Naive thymus-derived CD4-positive, alpha-beta T cell (primary cell): ENCODE measurements at regions of chr2 and their contacts with region 1.

Region 1: DNA sequence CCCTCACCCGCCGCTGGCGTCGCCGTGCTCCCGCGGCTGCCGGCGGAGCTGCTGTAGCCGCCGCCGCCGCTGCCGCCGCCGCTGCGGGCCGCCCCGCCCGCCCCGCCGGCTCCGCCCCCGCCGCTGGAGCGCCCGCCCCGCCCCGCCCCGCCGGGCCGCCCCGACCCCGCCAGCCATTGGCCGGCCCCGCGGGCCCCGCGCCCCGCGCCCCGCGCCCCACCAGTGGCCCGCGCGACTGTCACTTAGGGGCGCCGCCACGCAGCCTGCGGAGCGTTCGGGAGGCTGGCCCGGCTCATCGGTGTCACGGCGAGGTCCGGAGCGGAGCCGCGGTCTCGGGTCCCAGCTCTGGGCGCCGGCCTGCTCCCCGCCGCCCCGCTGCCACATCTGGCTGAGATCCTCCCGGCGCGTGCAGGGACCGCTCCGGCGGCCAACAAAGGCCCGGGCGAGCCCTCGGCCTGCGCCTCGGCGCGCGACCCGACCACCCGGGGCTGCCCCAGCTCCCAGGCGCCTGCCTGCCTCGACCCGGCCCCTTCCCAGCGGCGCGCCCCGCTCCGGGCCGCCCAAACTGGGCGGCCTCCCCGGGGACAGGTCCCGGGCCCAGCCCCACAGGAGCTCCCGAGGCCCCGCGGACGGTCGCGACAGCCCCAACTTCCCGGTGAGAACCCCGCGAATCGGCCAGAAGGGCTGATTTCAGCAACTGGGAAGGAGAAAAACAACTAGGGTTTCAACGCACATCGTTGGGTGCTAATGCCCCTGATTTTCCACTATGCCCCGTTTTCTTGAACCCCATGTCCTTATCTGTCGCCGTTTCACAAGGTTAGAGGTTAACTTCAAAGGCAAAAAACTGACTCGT is at the start of gene MGAT4A:
- DNase-seq: peak; percentile 74 to 85 (median 82)
- ATAC-seq: peak; percentile 88
- H3K4me3 ChIP-seq: peak within 1 kb of the TSS; percentile 79
- H3K4me3 Mint-ChIP-seq: peak within 1 kb of the TSS; percentile 89 to 98 (median 94)
- H3K27ac ChIP-seq: peak within 1 kb of the TSS; percentile 98
- H3K27ac Mint-ChIP-seq: peak within 1 kb of the TSS; percentile 90 to 98 (median 96)
- H3K4me1 ChIP-seq: peaks cover 48% of the 10 kb centered on the region in 2 donors
- H3K4me1 Mint-ChIP-seq: peaks cover 27 to 75% (median 64%) of the 10 kb centered on the region in 7 donors
- H3K27me3 ChIP-seq: no peaks in the 10 kb centered on the region
- H3K27me3 Mint-ChIP-seq: no peaks in the 10 kb centered on the region
- total RNA-seq, gene MGAT4A: 125 to 308 (median 240) TPM

Region 2: GRCh38 chr2:98502556-98503335 is 228.5 kb before region 1 on chr2:
- CTCF ChIA-PET with region 1: no interaction called
- POLR2A ChIA-PET with region 1: no interaction called
- intact Hi-C with region 1: no loop called
- DNase-seq: no peak
- ATAC-seq: no peak
- H3K4me3 ChIP-seq: no peak overlapping the region
- H3K4me3 Mint-ChIP-seq: peak overlapping the region in 9 of 10 donors; percentile 2 to 54 (median 40)
- H3K27ac ChIP-seq: no peak overlapping the region
- H3K27ac Mint-ChIP-seq: peak overlapping the region; percentile 20 to 91 (median 70)
- H3K4me1 ChIP-seq: peaks cover 33 to 79% of the 10 kb centered on the region in 2 donors
- H3K4me1 Mint-ChIP-seq: peaks cover 61 to 96% (median 95%) of the 10 kb centered on the region in 7 donors
- H3K27me3 ChIP-seq: no peaks in the 10 kb centered on the region
- H3K27me3 Mint-ChIP-seq: no peaks in the 10 kb centered on the region

Region 3: GRCh38 chr2:98649135-98649991 is 81.9 kb before region 1 on chr2:
- CTCF ChIA-PET with region 1: interaction called, 15 read pairs
- POLR2A ChIA-PET with region 1: interaction called, 353 read pairs
- intact Hi-C with region 1: loop called in 1 of 2 experiments (anchors 1 kb)
- DNase-seq: peak; percentile 53 to 87 (median 80)
- ATAC-seq: peak; percentile 99
- H3K4me3 ChIP-seq: no peak overlapping the region
- H3K4me3 Mint-ChIP-seq: peak overlapping the region in 8 of 10 donors; percentile 5 to 66 (median 50)
- H3K27ac ChIP-seq: peak overlapping the region; percentile 39
- H3K27ac Mint-ChIP-seq: peak overlapping the region; percentile 73 to 96 (median 92)
- H3K4me1 ChIP-seq: peaks cover 29 to 44% of the 10 kb centered on the region in 2 donors
- H3K4me1 Mint-ChIP-seq: peaks cover 40 to 66% (median 57%) of the 10 kb centered on the region in 7 donors
- H3K27me3 ChIP-seq: no peaks in the 10 kb centered on the region
- H3K27me3 Mint-ChIP-seq: no peaks in the 10 kb centered on the region

Region 4: GRCh38 chr2:98685930-98686887 is 45.1 kb before region 1 on chr2:
- CTCF ChIA-PET with region 1: interaction called, 3 read pairs
- POLR2A ChIA-PET with region 1: interaction called, 19 read pairs
- intact Hi-C with region 1: loop called in 1 of 2 experiments (anchors 2 kb)
- DNase-seq: no peak
- ATAC-seq: no peak
- H3K4me3 ChIP-seq: no peak overlapping the region
- H3K4me3 Mint-ChIP-seq: peak overlapping the region in 4 of 10 donors; percentile 38 to 62 (median 42)
- H3K27ac ChIP-seq: peak overlapping the region; percentile 36
- H3K27ac Mint-ChIP-seq: peak overlapping the region in 8 of 9 donors; percentile 66 to 92 (median 82)
- H3K4me1 ChIP-seq: peaks cover 27 to 42% of the 10 kb centered on the region in 2 donors
- H3K4me1 Mint-ChIP-seq: peaks cover 30 to 94% (median 88%) of the 10 kb centered on the region in 7 donors
- H3K27me3 ChIP-seq: no peaks in the 10 kb centered on the region
- H3K27me3 Mint-ChIP-seq: no peaks in the 10 kb centered on the region

Region 5: DNA sequence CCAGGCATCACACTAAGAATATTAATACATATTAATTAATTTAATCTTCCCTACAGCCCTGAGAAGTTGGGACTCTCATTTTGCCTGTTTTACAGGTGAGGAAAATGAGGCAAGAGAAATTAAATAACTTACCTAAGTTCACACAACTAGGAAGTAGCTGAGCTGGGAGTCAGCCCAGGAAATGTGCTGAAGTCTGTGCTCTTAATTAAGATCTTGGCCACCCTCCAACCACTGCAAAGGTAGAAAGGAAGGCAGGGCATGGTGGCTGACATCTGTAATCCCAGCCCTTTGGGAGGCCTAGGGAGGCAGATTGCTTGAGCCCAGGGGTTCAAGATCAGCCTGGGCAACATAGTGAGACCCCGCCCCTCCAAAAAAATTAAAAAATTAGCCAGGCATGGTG is 12.6 kb after region 1 on chr2:
- CTCF ChIA-PET with region 1: interaction called, 7 read pairs
- POLR2A ChIA-PET with region 1: interaction called, 28 read pairs
- intact Hi-C with region 1: no loop called
- DNase-seq: no peak
- ATAC-seq: no peak
- H3K4me3 ChIP-seq: no peak overlapping the region
- H3K4me3 Mint-ChIP-seq: peak overlapping the region in 7 of 10 donors; percentile 17 to 63 (median 44)
- H3K27ac ChIP-seq: no peak overlapping the region
- H3K27ac Mint-ChIP-seq: peak overlapping the region in 6 of 9 donors; percentile 34 to 74 (median 56)
- H3K4me1 ChIP-seq: peaks cover 13 to 45% of the 10 kb centered on the region in 2 donors
- H3K4me1 Mint-ChIP-seq: peaks cover 34 to 83% (median 74%) of the 10 kb centered on the region in 7 donors
- H3K27me3 ChIP-seq: no peaks in the 10 kb centered on the region
- H3K27me3 Mint-ChIP-seq: no peaks in the 10 kb centered on the region

Region 6: GRCh38 chr2:98822301-98823164 is 91.3 kb after region 1 on chr2:
- CTCF ChIA-PET with region 1: no interaction called
- POLR2A ChIA-PET with region 1: interaction called, 40 read pairs
- intact Hi-C with region 1: loop called (anchors 1 to 2 kb)
- DNase-seq: peak; percentile 49 to 78 (median 66)
- ATAC-seq: peak; percentile 94
- H3K4me3 ChIP-seq: peak overlapping the region; percentile 43
- H3K4me3 Mint-ChIP-seq: peak overlapping the region in 9 of 10 donors; percentile 24 to 63 (median 45)
- H3K27ac ChIP-seq: peak overlapping the region; percentile 66
- H3K27ac Mint-ChIP-seq: no peak overlapping the region
- H3K4me1 ChIP-seq: peaks cover 0 to under 1% of the 10 kb centered on the region in 2 donors
- H3K4me1 Mint-ChIP-seq: peaks cover 19 to 40% (median 25%) of the 10 kb centered on the region in 7 donors
- H3K27me3 ChIP-seq: no peaks in the 10 kb centered on the region
- H3K27me3 Mint-ChIP-seq: peaks cover 0 to 9% (median 0%) of the 10 kb centered on the region in 5 donors

Region 7: GRCh38 chr2:99066075-99066958 is 335.1 kb after region 1 on chr2:
- CTCF ChIA-PET with region 1: no interaction called
- POLR2A ChIA-PET with region 1: interaction called, 9 read pairs
- intact Hi-C with region 1: loop called in 1 of 2 experiments (anchors 2 kb)
- DNase-seq: peak in 7 of 9 donors; percentile 22 to 54 (median 40)
- ATAC-seq: peak; percentile 93
- H3K4me3 ChIP-seq: no peak overlapping the region
- H3K4me3 Mint-ChIP-seq: no peak overlapping the region
- H3K27ac ChIP-seq: peak overlapping the region; percentile 52
- H3K27ac Mint-ChIP-seq: no peak overlapping the region
- H3K4me1 ChIP-seq: peaks cover 8 to 23% of the 10 kb centered on the region in 2 donors
- H3K4me1 Mint-ChIP-seq: peaks cover 0 to 6% (median 0%) of the 10 kb centered on the region in 7 donors
- H3K27me3 ChIP-seq: no peaks in the 10 kb centered on the region
- H3K27me3 Mint-ChIP-seq: peaks cover 0 to 3% (median 0%) of the 10 kb centered on the region in 5 donors